ENCODE measurements at regions of chr13 and their contacts with region 1.

Region 1: GRCh38 chr13:80399340-80400163 is 58.6 kb upstream of the SPRY2 start:
- DNase-seq: peak; percentile 17
- ATAC-seq: peak; percentile 62
- H3K4me3 ChIP-seq: no peak overlapping the region
- H3K27ac ChIP-seq: no peak overlapping the region
- H3K4me1 ChIP-seq: no peaks in the 10 kb centered on the region
- H3K27me3 ChIP-seq: no peaks in the 10 kb centered on the region
- CTCF ChIP-seq: no peak
- EP300 ChIP-seq: peak; percentile 13 to 56; a peak in 3 of 4 replicates
- POLR2A ChIP-seq: no peak
- RAD21 ChIP-seq: no peak

Region 2: DNA sequence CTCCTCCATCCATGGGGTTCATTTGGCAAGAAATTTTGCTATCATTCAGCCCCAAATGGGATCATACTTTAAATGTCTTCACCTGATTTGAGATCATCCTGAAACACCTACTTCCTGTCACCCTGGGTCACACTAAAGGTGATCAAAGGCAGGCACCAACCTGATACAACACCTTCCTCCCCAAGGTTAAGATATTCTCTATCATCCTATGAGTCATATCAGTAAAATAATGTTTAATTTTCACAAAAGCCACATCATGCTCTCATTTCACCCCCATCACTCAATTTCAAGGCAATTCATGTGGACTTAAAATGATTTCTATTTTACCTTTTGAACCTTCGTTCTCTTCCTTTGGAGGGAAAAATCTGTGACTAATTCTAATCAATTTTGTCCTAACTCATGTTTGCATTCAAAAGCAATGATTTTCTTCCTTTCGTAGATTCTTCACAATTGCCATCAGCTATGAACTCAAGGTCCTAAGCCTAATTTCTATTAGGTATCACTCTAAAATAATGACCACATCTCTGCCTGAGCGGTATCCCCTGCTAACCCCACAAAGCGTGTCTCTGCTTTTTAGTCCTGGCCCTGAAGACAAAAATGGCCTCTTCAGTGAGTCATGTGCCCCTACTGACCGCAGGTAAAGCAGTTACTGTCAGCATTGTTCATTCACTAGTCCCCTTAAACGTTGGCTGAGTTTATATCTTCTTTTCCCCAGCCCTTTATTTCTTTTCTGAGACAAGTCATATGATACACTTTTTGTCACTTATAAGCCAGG is 197.7 kb before region 1 on chr13:
- CTCF ChIA-PET with region 1: no interaction called
- POLR2A ChIA-PET with region 1: no interaction called
- RAD21 ChIA-PET with region 1: no interaction called
- SMC1A ChIA-PET with region 1: no interaction called
- in situ Hi-C with region 1: no loop called
- intact Hi-C with region 1: no loop called
- DNase-seq: no peak
- ATAC-seq: peak; percentile 65
- H3K4me3 ChIP-seq: no peak overlapping the region
- H3K27ac ChIP-seq: no peak overlapping the region
- H3K4me1 ChIP-seq: no peaks in the 10 kb centered on the region
- H3K27me3 ChIP-seq: no peaks in the 10 kb centered on the region
- CTCF ChIP-seq: no peak
- EP300 ChIP-seq: no peak
- POLR2A ChIP-seq: no peak
- RAD21 ChIP-seq: no peak

Region 3: DNA sequence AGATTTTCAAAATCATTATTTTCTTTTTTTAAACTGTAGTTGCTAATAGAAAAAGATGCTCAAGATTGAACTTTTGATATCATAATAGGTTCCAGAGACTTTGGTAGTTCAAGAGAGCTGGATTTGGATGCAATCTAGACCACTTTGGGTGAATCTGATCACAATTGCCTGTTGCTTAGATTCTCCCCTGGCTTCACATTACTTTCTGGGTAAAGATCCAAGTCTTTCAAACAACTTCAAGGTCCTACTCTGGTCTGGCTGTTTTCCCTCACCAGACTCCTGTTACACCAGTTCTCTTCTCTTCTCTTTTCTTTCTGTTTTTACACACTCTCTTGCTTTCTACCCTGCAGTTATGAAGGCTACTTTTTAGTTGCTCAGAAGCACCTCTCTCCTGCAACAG is 51.2 kb before region 1 on chr13:
- CTCF ChIA-PET with region 1: interaction called, 38 read pairs
- POLR2A ChIA-PET with region 1: interaction called, 16 read pairs
- RAD21 ChIA-PET with region 1: interaction called, 111 read pairs
- SMC1A ChIA-PET with region 1: interaction called, 84 read pairs
- in situ Hi-C with region 1: no loop called
- intact Hi-C with region 1: loop called (anchors 2 kb)
- DNase-seq: no peak
- ATAC-seq: no peak; the same call in 2 of the 3 replicates
- H3K4me3 ChIP-seq: no peak overlapping the region
- H3K27ac ChIP-seq: no peak overlapping the region
- H3K4me1 ChIP-seq: no peaks in the 10 kb centered on the region
- H3K27me3 ChIP-seq: no peaks in the 10 kb centered on the region
- CTCF ChIP-seq: no peak
- EP300 ChIP-seq: no peak
- POLR2A ChIP-seq: no peak
- RAD21 ChIP-seq: no peak

Region 4: GRCh38 chr13:80413611-80414010 is 14.1 kb after region 1 on chr13:
- CTCF ChIA-PET with region 1: interaction called, 22 read pairs
- POLR2A ChIA-PET with region 1: interaction called, 13 read pairs
- RAD21 ChIA-PET with region 1: interaction called, 49 read pairs
- SMC1A ChIA-PET with region 1: interaction called, 133 read pairs
- in situ Hi-C with region 1: no loop called
- intact Hi-C with region 1: no loop called
- DNase-seq: no peak
- ATAC-seq: no peak
- H3K4me3 ChIP-seq: no peak overlapping the region
- H3K27ac ChIP-seq: no peak overlapping the region
- H3K4me1 ChIP-seq: no peaks in the 10 kb centered on the region
- H3K27me3 ChIP-seq: no peaks in the 10 kb centered on the region
- CTCF ChIP-seq: no peak
- EP300 ChIP-seq: no peak
- POLR2A ChIP-seq: no peak
- RAD21 ChIP-seq: no peak

Region 5: GRCh38 chr13:80436571-80437169 is 37.1 kb after region 1 on chr13:
- CTCF ChIA-PET with region 1: interaction called, 10 read pairs
- POLR2A ChIA-PET with region 1: interaction called, 4 read pairs
- RAD21 ChIA-PET with region 1: interaction called, 13 read pairs
- SMC1A ChIA-PET with region 1: interaction called, 707 read pairs
- in situ Hi-C with region 1: no loop called
- intact Hi-C with region 1: no loop called
- DNase-seq: no peak
- ATAC-seq: no peak
- H3K4me3 ChIP-seq: no peak overlapping the region
- H3K27ac ChIP-seq: no peak overlapping the region
- H3K4me1 ChIP-seq: no peaks in the 10 kb centered on the region
- H3K27me3 ChIP-seq: no peaks in the 10 kb centered on the region
- CTCF ChIP-seq: no peak
- EP300 ChIP-seq: no peak
- POLR2A ChIP-seq: no peak
- RAD21 ChIP-seq: no peak

Region 6: GRCh38 chr13:80454245-80454644 is 54.7 kb after region 1 on chr13:
- CTCF ChIA-PET with region 1: interaction called, 6 read pairs
- POLR2A ChIA-PET with region 1: interaction called, 6 read pairs
- RAD21 ChIA-PET with region 1: interaction called, 28 read pairs
- SMC1A ChIA-PET with region 1: interaction called, 707 read pairs
- in situ Hi-C with region 1: no loop called
- intact Hi-C with region 1: no loop called
- DNase-seq: peak; percentile 34
- ATAC-seq: peak; percentile 85
- H3K4me3 ChIP-seq: no peak overlapping the region
- H3K27ac ChIP-seq: no peak overlapping the region
- H3K4me1 ChIP-seq: no peaks in the 10 kb centered on the region
- H3K27me3 ChIP-seq: no peaks in the 10 kb centered on the region
- CTCF ChIP-seq: no peak
- EP300 ChIP-seq: peak; percentile 88 to 92
- POLR2A ChIP-seq: no peak
- RAD21 ChIP-seq: no peak

Region 7: DNA sequence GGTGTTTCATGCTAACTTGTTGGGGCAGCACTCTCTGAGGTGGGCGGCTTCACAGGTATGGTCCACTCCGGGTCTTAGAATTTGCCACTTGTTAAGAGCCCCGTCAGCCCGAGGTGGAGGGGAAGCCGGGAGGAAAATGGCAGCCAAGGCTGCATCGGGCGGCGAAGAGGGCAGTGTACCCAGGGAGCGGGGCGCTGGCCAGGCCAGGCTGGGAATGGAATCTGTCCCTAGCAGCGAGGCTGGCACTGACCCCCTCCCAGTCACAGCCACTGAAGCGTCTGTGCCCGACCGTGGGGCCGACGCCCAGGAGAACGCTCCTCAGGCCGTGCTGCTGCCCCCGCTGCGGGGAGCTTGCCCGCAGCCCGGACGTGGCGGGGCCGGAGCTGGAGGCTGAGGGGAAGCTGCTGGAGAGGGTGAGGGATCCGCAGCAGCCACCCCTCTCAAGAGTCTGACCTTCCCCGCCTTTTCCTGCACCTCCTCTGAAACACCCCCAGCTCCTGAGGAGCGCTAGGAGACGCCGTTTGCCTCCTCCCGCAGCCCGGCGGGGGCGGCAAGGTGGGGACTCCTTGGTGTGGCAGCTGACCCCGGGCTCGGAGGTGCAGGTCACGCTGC is 255.2 kb after region 1 on chr13:
- CTCF ChIA-PET with region 1: no interaction called
- POLR2A ChIA-PET with region 1: no interaction called
- RAD21 ChIA-PET with region 1: no interaction called
- SMC1A ChIA-PET with region 1: no interaction called
- in situ Hi-C with region 1: no loop called
- intact Hi-C with region 1: no loop called
- DNase-seq: no peak
- ATAC-seq: no peak
- H3K4me3 ChIP-seq: no peak overlapping the region
- H3K27ac ChIP-seq: no peak overlapping the region
- H3K4me1 ChIP-seq: no peaks in the 10 kb centered on the region
- H3K27me3 ChIP-seq: no peaks in the 10 kb centered on the region
- CTCF ChIP-seq: no peak
- EP300 ChIP-seq: no peak
- POLR2A ChIP-seq: no peak
- RAD21 ChIP-seq: no peak

Measured in GM12878 (cell line).